Right ventricle myocardium inferior (tissue), 1 donor: ENCODE measurements at regions of chr21 and their contacts with region 1.

Region 1: DNA sequence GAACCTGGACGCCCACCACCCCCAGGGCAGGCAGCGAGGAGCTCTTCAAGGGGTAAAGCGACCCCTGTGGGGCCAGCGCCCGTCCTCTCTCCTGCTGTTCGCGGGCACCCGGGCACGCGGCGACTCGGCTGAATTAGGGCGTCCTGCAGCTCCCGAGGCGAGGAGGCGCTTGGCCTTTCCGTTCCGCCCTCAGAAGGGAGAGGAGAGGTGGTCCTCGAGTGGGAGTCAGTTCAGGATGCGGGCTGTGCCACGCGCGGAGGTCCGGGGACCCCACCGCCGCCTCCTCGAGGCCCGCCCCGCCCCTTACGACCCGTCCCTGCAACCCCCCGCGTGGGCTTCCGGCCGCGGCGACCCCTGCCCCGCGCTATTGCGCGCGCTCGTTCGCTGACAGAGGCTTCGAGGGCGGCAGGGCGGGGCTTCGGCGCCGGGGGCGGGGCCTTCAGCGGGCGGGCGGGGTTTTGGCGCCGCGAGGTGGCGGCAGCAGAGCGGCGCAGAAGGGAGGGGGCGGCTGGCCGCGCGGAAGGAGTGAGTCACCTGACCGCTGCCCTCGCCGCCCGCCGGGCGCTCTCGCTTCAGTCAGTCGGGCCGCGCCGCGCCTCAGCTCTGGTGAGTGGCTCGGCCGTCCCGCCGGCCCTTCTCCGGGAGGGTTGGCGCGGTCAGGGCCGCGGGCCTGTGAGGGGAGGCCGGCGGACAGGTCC is at the start of gene BACH1:
- DNase-seq: peak; percentile 97
- ATAC-seq: peak; percentile 92
- total RNA-seq, gene BACH1: 35.5 TPM

Region 2: DNA sequence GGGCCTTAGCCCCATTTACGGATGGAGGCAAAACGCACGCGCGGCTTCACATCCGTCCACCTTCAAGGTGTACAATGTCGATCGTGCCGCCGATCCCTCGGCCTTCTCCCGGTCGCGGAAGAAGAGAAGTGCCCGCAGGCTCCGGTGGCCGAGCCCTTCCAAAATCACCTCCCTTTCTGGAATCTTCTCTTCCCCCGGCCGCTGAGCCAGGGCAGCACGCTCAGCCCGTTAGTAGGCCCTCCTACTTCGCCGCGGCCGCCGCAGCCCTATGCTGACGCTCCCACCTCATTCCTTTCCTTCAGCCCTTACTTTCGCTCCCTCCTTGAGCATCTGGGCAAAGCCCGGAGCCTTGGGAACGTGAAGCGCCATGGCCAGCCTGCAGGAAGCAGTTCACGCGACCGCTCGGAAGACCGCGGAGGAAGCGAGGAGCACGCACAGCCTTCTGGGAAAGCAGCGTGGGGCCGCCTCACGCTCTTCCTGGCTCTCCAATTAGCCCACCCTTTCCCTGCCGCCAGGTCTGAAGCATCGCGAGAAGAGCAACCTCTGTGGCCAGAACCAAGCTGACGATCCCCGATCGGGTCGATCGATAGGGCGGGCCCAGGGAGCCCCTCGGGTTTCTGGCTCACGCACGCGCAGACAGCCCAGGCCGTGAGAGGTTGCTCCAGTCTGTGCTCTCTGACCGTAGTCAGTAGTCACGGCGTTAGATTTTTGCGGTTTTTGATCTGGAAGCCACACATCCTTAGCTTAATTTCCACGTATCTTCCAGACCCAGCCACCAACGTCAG is 225.1 kb before region 1 on chr21 and contains the start of gene CCT8:
- intact Hi-C with region 1: loop called (anchors 10 kb)
- DNase-seq: peak; percentile 99
- ATAC-seq: peak; percentile 98
- total RNA-seq, gene CCT8: 110 TPM

Region 3: GRCh38 chr21:29245104-29245643 is 53.3 kb before region 1 on chr21:
- intact Hi-C with region 1: no loop called
- DNase-seq: no peak
- ATAC-seq: no peak

Region 4: GRCh38 chr21:29342363-29342957 is 44.0 kb after region 1 on chr21:
- intact Hi-C with region 1: loop called (anchors 5 kb)
- DNase-seq: peak; percentile 71
- ATAC-seq: peak; percentile 90